ENCODE measurements at regions of chr7 and their contacts with region 1.

Region 1: GRCh38 chr7:108222236-108222892 is 92.2 kb upstream of the LAMB4 start:
- DNase-seq: peak; percentile 58 to 62
- H3K4me3 ChIP-seq: no peak overlapping the region
- H3K4me3 Mint-ChIP-seq: no peak overlapping the region
- H3K27ac Mint-ChIP-seq: peak overlapping the region; percentile 67
- H3K4me1 ChIP-seq: peaks cover 17% of the 10 kb centered on the region
- H3K4me1 Mint-ChIP-seq: peaks cover 20% of the 10 kb centered on the region
- H3K27me3 ChIP-seq: no peaks in the 10 kb centered on the region
- H3K27me3 Mint-ChIP-seq: no peaks in the 10 kb centered on the region
- CTCF ChIP-seq: peak in 1 of 2 experiments; percentile 55

Region 2: DNA sequence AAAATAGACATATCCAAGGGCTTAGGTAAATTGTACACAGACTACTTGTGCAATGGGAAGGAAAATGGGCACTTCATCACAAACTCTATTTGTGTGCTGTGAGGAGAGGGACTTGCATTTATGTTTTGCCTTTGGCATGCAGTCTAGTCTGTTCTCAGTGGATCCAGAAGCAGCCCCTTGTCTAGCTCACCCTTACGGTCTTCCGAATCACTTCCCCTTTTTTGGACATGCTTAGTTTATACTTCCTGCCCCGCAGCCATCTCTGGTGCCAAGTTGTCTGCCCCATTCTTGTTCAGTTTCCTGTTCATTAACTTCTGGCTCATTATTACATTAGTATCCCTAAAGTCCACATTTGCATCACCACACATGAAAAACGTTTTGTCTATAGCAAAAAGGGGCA is 72.2 kb after region 1 on chr7:
- CTCF ChIA-PET with region 1: no interaction called
- POLR2A ChIA-PET with region 1: no interaction called
- intact Hi-C with region 1: loop called (anchors 5 kb)
- DNase-seq: no peak
- H3K4me3 ChIP-seq: no peak overlapping the region
- H3K4me3 Mint-ChIP-seq: no peak overlapping the region
- H3K27ac Mint-ChIP-seq: no peak overlapping the region
- H3K4me1 ChIP-seq: peaks cover 36% of the 10 kb centered on the region
- H3K4me1 Mint-ChIP-seq: peaks cover 37% of the 10 kb centered on the region
- H3K27me3 ChIP-seq: no peaks in the 10 kb centered on the region
- H3K27me3 Mint-ChIP-seq: no peaks in the 10 kb centered on the region
- CTCF ChIP-seq: no peak

Region 3: GRCh38 chr7:108340856-108341411 is 118.6 kb after region 1 on chr7:
- CTCF ChIA-PET with region 1: no interaction called
- POLR2A ChIA-PET with region 1: no interaction called
- intact Hi-C with region 1: loop called (anchors 1 kb)
- DNase-seq: peak; percentile 93 to 97
- H3K4me3 ChIP-seq: no peak overlapping the region
- H3K4me3 Mint-ChIP-seq: peak overlapping the region; percentile 58
- H3K27ac Mint-ChIP-seq: peak overlapping the region; percentile 81
- H3K4me1 ChIP-seq: peaks cover 38% of the 10 kb centered on the region
- H3K4me1 Mint-ChIP-seq: peaks cover 40% of the 10 kb centered on the region
- H3K27me3 ChIP-seq: no peaks in the 10 kb centered on the region
- H3K27me3 Mint-ChIP-seq: no peaks in the 10 kb centered on the region
- CTCF ChIP-seq: no peak

Region 4: GRCh38 chr7:108459931-108460551 is 237.7 kb after region 1 on chr7:
- CTCF ChIA-PET with region 1: interaction called, 3 read pairs
- POLR2A ChIA-PET with region 1: interaction called, 3 read pairs
- intact Hi-C with region 1: loop called (anchors 1 kb)
- DNase-seq: peak in 1 of 2 experiments; percentile 68
- H3K4me3 ChIP-seq: no peak overlapping the region
- H3K4me3 Mint-ChIP-seq: no peak overlapping the region
- H3K27ac Mint-ChIP-seq: no peak overlapping the region
- H3K4me1 ChIP-seq: 0 out of 2 replicates have a peak, but pooled peaks cover 3% of the 10 kb centered on the region
- H3K4me1 Mint-ChIP-seq: peaks cover 17% of the 10 kb centered on the region
- H3K27me3 ChIP-seq: no peaks in the 10 kb centered on the region
- H3K27me3 Mint-ChIP-seq: no peaks in the 10 kb centered on the region
- CTCF ChIP-seq: peak; percentile 65 to 69